Ascending aorta (tissue), 2 donors: ENCODE measurements at regions of chr12 and their contacts with region 1.

Region 1: DNA sequence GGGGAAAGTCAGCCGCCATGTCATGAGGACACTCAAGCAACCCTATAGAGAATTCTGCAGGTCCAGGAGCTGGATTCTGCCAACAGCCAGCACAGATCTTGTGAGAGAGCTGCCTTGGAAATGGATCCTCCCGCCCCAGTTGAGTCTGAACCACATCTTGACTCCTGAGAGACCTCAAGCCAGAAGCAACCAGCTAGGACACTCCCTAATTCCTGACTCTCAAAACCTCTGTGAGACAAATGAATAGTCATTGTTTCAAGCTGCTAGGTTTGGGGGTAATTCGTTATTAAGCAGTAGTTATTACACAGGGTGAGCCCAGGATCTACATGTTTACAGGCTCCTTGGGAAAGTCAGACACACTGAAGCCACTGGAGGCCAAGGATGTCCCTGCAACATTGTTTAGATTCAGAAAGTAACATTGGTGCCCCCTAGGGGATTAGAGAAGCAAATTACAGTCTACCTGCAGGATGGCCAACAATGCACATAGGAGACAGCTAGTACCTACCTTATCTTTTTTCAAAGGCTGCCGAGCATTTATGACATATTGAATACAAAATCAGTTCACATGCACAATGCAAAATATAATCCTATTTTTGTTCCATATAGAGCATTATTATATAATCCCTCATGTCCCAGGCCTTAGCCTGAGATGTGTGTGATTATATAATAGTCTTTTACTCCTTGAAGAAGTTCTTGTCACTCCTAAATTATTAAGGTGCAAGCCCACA is 57.9 kb upstream of the FICD start:
- DNase-seq: no peak
- H3K4me3 ChIP-seq: no peak overlapping the region
- H3K27ac ChIP-seq: no peak overlapping the region
- H3K4me1 ChIP-seq: no peaks in the 10 kb centered on the region
- H3K27me3 ChIP-seq: no peaks in the 10 kb centered on the region
- CTCF ChIP-seq: peak; percentile 47 to 77 (median 66)

Region 2: DNA sequence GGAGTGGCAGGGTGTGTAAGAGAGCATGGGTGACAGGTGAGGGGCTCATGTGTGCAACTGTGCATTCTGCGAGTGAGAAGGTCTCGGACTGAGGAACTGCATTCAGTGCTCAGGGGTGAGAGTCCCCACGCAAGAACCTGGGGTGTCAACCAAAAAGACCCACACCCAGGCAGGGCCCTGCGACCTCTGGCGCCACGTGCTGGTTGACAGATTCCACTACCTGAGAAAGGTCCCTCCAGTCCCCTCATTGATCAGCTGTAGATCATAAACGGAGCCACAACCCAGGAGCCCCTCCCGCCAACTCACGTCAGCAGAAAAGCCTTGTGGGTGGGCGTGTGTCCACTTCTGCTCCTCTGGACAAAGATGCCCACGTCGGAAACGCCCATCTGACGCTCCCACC is 583.9 kb before region 1 on chr12:
- intact Hi-C with region 1: no loop called
- DNase-seq: no peak
- H3K4me3 ChIP-seq: no peak overlapping the region
- H3K27ac ChIP-seq: no peak overlapping the region
- H3K4me1 ChIP-seq: no peaks in the 10 kb centered on the region
- H3K27me3 ChIP-seq: no peaks in the 10 kb centered on the region
- CTCF ChIP-seq: no peak

Region 3: GRCh38 chr12:108099073-108099472 is 358.1 kb before region 1 on chr12:
- intact Hi-C with region 1: loop called (anchors 5 kb)
- DNase-seq: no peak
- H3K4me3 ChIP-seq: no peak overlapping the region
- H3K27ac ChIP-seq: no peak overlapping the region
- H3K4me1 ChIP-seq: no peaks in the 10 kb centered on the region
- H3K27me3 ChIP-seq: no peaks in the 10 kb centered on the region
- CTCF ChIP-seq: peak; percentile 29 to 60 (median 35)

Region 4: GRCh38 chr12:108234158-108234557 is 223.0 kb before region 1 on chr12:
- intact Hi-C with region 1: loop called (anchors 2 kb)
- DNase-seq: no peak
- H3K4me3 ChIP-seq: no peak overlapping the region
- H3K27ac ChIP-seq: no peak overlapping the region
- H3K4me1 ChIP-seq: no peaks in the 10 kb centered on the region
- H3K27me3 ChIP-seq: no peaks in the 10 kb centered on the region
- CTCF ChIP-seq: peak; percentile 45 to 61 (median 56)